ENCODE measurements at regions of chr20 and their contacts with region 1.

Region 1: DNA sequence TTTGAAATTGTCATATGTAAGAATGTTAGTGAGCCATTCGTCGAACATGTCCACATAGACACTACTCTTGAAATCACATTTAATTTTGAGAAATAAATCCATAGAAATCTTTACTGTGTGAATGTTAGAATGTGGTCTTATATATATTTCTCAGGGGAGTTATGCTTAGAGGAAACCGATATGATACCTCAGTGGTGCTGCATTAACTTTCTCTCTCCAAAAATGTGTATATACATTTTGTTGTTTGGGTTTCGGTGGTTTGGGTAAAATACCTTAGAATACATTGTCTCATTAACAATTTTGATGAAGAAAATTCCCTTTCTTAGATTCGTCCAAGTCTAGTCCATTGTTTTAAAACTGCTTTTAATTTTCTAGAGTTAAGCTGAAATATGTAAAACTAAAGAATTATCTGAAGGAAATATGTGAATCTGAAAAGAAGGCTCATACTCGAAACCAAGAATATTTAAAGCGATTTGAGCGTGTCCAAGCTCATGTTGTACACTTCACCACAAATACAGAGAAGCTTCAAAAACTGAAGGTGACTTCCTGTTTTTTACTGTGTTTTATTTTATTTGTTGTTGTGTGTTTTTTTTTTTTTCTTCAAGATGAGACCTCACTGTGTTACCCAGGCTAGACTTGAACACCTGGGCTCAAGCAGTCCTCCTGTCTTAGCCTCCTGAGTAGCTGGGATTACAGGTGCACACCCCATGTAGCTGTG is 10.3 kb downstream of the KIZ start:
- DNase-seq: no peak
- H3K4me3 ChIP-seq: no peak overlapping the region
- H3K27ac ChIP-seq: no peak overlapping the region
- H3K4me1 ChIP-seq: no peaks in the 10 kb centered on the region; a peak in 1 of 4 replicates
- H3K27me3 ChIP-seq: no peaks in the 10 kb centered on the region
- CTCF ChIP-seq: no peak
- EP300 ChIP-seq: no peak
- RAD21 ChIP-seq: no peak

Region 2: DNA sequence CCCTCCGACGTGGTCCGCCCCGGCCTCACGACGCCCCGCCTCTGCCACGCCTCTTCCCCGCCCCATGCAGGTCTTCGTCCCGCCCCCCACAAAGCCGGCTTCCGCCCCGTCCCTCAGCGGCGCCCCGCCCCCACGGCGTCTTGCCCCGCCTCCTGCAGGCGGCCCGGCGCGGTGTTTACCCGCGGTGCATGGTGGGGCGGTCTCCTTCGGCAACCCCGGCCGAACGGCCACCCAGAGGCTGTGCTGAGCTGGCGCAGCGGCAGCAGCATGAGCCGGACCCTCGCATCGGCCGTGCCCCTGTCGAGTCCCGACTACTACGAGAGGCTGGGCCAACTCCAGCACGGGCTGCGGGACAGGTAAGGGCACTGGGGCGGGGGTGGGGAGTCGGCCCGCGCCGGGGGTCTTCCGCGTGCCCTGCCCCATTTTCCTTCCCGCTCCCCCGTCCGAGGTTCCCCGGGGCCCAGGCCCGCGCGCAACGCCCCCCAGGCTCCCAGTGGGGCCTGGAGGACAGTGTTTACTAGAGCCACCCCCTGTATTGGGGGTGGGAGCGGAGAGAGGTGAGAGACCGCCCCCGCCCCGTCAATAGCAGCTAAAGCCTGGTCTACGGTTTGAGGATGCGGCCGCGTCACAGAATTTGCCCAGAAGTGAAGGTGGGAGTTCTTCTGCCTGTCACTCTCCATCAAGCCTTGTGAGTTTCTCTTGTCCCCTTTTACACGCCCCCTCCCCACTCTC is 10.2 kb before region 1 on chr20 and contains the start of gene KIZ:
- CTCF ChIA-PET with region 1: interaction called, 11 read pairs
- POLR2A ChIA-PET with region 1: no interaction called
- DNase-seq: peak; percentile 98
- H3K4me3 ChIP-seq: peak within 1 kb of the TSS; percentile 88 to 91
- H3K27ac ChIP-seq: peak within 1 kb of the TSS; percentile 49 to 71; a peak in 2 of 4 replicates
- H3K4me1 ChIP-seq: peaks cover 0 to 6% of the 10 kb centered on the region in 2 experiments; a peak in 2 of 4 replicates
- H3K27me3 ChIP-seq: no peaks in the 10 kb centered on the region
- CTCF ChIP-seq: peak; percentile 34; the same call in 1 of the 2 replicates
- EP300 ChIP-seq: no peak
- RAD21 ChIP-seq: peak; percentile 29
- polyA plus RNA-seq, gene KIZ: 3.9 and 5.5 TPM in 2 replicates

Region 3: DNA sequence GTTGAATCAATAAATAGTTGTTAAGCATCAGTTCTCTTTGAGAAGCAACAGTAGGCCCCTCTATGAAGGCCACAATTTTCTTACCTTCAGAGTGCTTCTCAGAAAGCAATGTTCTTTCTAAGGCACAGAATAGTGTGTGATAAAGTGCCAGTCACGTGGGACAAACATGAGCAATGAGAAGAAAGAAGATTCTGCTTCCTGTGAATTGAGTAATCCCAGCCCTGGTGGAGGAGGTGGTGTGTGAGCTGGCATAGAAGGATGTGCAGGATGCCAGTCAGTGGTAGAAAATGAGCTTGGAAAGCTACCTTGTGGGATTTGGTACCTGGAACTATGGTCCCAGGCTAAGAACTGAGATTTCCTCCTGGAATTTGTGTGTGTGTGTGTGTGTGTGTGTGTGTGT is 11.4 kb after region 1 on chr20:
- CTCF ChIA-PET with region 1: no interaction called
- POLR2A ChIA-PET with region 1: no interaction called
- DNase-seq: no peak
- H3K4me3 ChIP-seq: no peak overlapping the region
- H3K27ac ChIP-seq: no peak overlapping the region
- H3K4me1 ChIP-seq: peaks cover 0 to 18% of the 10 kb centered on the region in 2 experiments; a peak in 2 of 4 replicates
- H3K27me3 ChIP-seq: no peaks in the 10 kb centered on the region
- CTCF ChIP-seq: no peak
- EP300 ChIP-seq: no peak
- RAD21 ChIP-seq: no peak

Measured in SK-N-SH (cell line).